ENCODE measurements at regions of chr16 and their contacts with region 1.

Region 1: GRCh38 chr16:72008424-72009216 is at the start of gene DHODH:
- DNase-seq: peak; percentile 98
- H3K4me3 Mint-ChIP-seq: peak within 1 kb of the TSS; percentile 99
- H3K27ac Mint-ChIP-seq: peak within 1 kb of the TSS; percentile 99
- H3K4me1 Mint-ChIP-seq: peaks cover 16% of the 10 kb centered on the region
- H3K27me3 Mint-ChIP-seq: no peaks in the 10 kb centered on the region
- total RNA-seq, gene DHODH: 31.0 and 33.1 TPM in 2 replicates

Region 2: DNA sequence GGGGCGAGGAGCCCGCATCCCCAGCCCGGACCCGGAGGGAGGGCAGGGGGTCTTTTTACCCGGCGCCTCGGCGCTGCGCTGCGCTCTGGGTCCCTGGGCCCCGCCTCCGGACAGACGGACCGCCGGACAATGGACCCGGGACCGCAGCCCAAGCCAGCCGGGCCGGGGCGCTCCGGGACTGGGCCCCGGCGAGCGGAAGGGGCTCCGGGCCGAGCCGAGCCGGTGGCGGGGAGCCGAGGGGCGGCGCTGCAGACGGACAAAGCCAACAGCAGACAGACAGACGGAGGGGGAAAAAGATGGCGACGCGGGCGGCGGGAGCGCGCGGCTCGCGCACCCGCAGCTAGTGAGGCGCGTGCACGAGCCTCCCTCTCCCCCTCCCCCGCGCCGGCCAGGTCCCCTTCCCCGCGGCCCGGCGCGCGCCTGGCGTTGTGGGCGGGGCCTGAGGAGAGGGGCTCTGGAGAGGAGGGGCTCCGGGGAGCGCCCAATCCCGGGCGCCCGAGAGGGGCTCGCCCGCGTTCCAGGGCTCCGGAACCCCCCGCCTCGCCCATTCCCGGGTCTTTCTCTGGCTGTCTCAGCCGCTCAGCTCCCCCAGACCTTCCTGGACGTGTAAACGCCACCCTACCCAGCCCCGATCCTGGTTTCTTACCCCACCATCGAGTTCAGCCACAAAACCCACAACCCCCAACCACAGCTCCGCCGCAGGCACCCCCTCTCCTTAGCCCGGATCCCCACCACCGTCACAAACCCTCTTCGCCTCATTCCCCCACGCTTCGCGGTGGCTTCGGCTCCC is 124.6 kb before region 1 on chr16 and contains the start of gene ZNF821:
- intact Hi-C with region 1: loop called (anchors 1 kb)
- DNase-seq: peak; percentile 61
- H3K4me3 Mint-ChIP-seq: peak within 1 kb of the TSS; percentile 96
- H3K27ac Mint-ChIP-seq: peak within 1 kb of the TSS; percentile 94
- H3K4me1 Mint-ChIP-seq: peaks cover 54% of the 10 kb centered on the region
- H3K27me3 Mint-ChIP-seq: peaks cover 16% of the 10 kb centered on the region
- total RNA-seq, gene ZNF821: 6.4 and 7.4 TPM in 2 replicates

Region 3: DNA sequence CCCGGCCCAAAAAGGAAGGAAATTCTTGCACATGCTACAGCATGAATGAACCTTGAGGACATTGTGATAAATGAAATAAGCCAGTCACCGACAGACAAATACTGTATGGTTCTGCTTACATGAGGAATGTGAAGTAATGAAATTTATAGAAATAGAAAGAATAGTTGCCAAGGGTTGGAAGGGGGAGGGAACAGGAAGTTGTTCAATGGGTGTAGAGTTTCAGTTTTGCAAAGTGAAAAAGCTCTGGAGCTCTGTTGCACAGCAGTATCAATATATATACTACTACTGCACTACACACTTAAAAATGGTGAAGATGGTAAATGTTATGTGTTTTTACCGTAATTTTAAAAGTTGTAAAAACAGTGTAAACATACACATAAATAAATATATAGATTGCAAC is 52.1 kb before region 1 on chr16:
- intact Hi-C with region 1: no loop called
- DNase-seq: no peak
- H3K4me3 Mint-ChIP-seq: no peak overlapping the region
- H3K27ac Mint-ChIP-seq: no peak overlapping the region
- H3K4me1 Mint-ChIP-seq: peaks cover 37% of the 10 kb centered on the region
- H3K27me3 Mint-ChIP-seq: peaks cover 4% of the 10 kb centered on the region

Region 4: DNA sequence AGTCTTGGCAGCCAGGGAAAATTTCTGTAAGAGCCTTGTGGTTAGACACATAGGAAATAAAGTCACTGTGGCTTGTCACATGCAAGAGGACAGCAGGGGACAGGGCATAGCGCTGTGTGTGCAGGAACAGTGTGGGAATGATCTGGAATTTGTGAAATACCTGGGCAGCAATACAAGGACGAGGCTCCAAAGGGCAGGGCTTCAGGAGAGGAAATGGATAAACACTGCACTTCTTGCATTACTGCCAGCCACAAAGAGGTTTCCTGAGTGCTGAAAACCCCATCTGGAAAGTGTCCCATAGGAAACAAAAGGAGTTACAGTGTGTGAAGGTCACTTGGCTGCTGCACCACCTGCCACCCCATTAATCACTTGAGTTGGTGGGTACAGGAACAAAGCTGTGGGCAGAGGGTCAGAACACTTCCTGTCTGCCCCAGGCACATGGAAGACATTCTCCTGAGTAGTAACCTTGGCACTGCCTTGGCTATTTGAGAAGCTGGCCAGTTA is 33.6 kb after region 1 on chr16:
- intact Hi-C with region 1: no loop called
- DNase-seq: no peak
- H3K4me3 Mint-ChIP-seq: no peak overlapping the region
- H3K27ac Mint-ChIP-seq: no peak overlapping the region
- H3K4me1 Mint-ChIP-seq: no peaks in the 10 kb centered on the region
- H3K27me3 Mint-ChIP-seq: no peaks in the 10 kb centered on the region

Region 5: GRCh38 chr16:72093448-72094265 is 85.0 kb after region 1 on chr16 and contains the starts of genes DHX38 and TXNL4B:
- intact Hi-C with region 1: loop called (anchors 1 kb)
- DNase-seq: peak; percentile 92
- H3K4me3 Mint-ChIP-seq: peak within 1 kb of the TSS; percentile 99
- H3K27ac Mint-ChIP-seq: peak within 1 kb of the TSS; percentile 99
- H3K4me1 Mint-ChIP-seq: peaks cover 64% of the 10 kb centered on the region
- H3K27me3 Mint-ChIP-seq: no peaks in the 10 kb centered on the region
- total RNA-seq, gene DHX38: 89.8 and 99.4 TPM in 2 replicates
- total RNA-seq, gene TXNL4B: 24.0 and 25.1 TPM in 2 replicates

Region 6: DNA sequence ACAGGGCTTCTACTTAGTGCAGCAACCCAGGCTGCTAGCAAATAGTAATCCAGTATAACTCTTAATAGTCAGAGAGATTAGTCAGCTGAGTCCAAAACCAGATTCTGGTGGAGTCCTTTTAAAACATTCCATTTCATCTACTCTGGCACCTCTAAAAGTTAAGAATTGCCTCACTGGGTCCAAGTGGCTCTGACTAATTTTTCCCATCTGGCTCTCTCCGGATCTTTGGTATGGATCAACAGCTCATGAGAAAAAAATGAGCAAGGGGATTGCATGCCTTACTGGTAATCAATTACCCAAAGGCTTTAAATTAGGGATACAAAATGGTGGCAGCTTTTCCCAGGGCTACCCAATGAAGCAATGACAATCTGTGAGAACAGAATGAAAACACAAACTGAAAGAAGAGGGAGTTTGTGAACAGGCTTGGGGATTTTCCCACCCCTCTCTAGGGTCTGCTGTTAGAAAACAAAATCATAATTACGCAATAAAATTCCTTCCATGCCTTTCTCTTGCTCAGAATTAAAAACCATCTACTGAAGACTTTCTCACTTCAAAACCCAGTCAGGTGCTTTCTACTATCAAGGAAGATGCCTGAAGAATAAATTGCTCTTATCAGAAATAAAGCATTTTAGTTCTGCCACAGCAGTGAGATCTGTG is 247.9 kb after region 1 on chr16:
- intact Hi-C with region 1: no loop called
- DNase-seq: no peak
- H3K4me3 Mint-ChIP-seq: no peak overlapping the region
- H3K27ac Mint-ChIP-seq: no peak overlapping the region
- H3K4me1 Mint-ChIP-seq: no peaks in the 10 kb centered on the region
- H3K27me3 Mint-ChIP-seq: no peaks in the 10 kb centered on the region

Region 7: GRCh38 chr16:72474501-72475123 is 466.0 kb after region 1 on chr16:
- intact Hi-C with region 1: loop called (anchors 2 kb)
- DNase-seq: no peak
- H3K4me3 Mint-ChIP-seq: no peak overlapping the region
- H3K27ac Mint-ChIP-seq: peak overlapping the region; percentile 46
- H3K4me1 Mint-ChIP-seq: peaks cover 20% of the 10 kb centered on the region
- H3K27me3 Mint-ChIP-seq: no peaks in the 10 kb centered on the region

Measured in activated T-helper 1 cell treated with anti-CD3 and anti-CD28 coated beads, Interleukin-12 subunit alpha, Interleukin-12 subunit beta, Interleukin-2, Interleukin-4 antibody, amounts not matched to agents 30 ng/mL and 10 ng/mL and 1 ng/mL, durations not matched to agents 14 hours and 24 hours and 36 hours (primary cell).